WTC11 (cell line): ENCODE measurements at regions of chr2 and their contacts with region 1.

Region 1: GRCh38 chr2:47336259-47337238 is 66.4 kb upstream of the MSH2 start:
- DNase-seq: no peak
- ATAC-seq: no peak
- H3K4me3 Mint-ChIP-seq: no peak overlapping the region
- H3K27ac Mint-ChIP-seq: peak overlapping the region; percentile 55
- H3K4me1 Mint-ChIP-seq: peaks cover 62% of the 10 kb centered on the region
- H3K27me3 Mint-ChIP-seq: no peaks in the 10 kb centered on the region
- CTCF ChIP-seq: no peak

Region 2: GRCh38 chr2:47237375-47237821 is 99.2 kb before region 1 on chr2:
- CTCF ChIA-PET with region 1: no interaction called
- POLR2A ChIA-PET with region 1: no interaction called
- DNase-seq: no peak
- ATAC-seq: peak; percentile 7
- H3K4me3 Mint-ChIP-seq: no peak overlapping the region
- H3K27ac Mint-ChIP-seq: peak overlapping the region; percentile 28; the same call in 1 of the 2 replicates
- H3K4me1 Mint-ChIP-seq: peaks cover 48% of the 10 kb centered on the region
- H3K27me3 Mint-ChIP-seq: peaks cover 5% of the 10 kb centered on the region; the same call in 1 of the 2 replicates
- CTCF ChIP-seq: no peak

Region 3: GRCh38 chr2:47313141-47313691 is 23.3 kb before region 1 on chr2:
- CTCF ChIA-PET with region 1: interaction called, 10 read pairs
- POLR2A ChIA-PET with region 1: no interaction called
- DNase-seq: no peak
- ATAC-seq: peak; percentile 49
- H3K4me3 Mint-ChIP-seq: no peak overlapping the region
- H3K27ac Mint-ChIP-seq: no peak overlapping the region; the same call in 1 of the 2 replicates
- H3K4me1 Mint-ChIP-seq: peaks cover 16% of the 10 kb centered on the region
- H3K27me3 Mint-ChIP-seq: no peaks in the 10 kb centered on the region
- CTCF ChIP-seq: no peak

Region 4: DNA sequence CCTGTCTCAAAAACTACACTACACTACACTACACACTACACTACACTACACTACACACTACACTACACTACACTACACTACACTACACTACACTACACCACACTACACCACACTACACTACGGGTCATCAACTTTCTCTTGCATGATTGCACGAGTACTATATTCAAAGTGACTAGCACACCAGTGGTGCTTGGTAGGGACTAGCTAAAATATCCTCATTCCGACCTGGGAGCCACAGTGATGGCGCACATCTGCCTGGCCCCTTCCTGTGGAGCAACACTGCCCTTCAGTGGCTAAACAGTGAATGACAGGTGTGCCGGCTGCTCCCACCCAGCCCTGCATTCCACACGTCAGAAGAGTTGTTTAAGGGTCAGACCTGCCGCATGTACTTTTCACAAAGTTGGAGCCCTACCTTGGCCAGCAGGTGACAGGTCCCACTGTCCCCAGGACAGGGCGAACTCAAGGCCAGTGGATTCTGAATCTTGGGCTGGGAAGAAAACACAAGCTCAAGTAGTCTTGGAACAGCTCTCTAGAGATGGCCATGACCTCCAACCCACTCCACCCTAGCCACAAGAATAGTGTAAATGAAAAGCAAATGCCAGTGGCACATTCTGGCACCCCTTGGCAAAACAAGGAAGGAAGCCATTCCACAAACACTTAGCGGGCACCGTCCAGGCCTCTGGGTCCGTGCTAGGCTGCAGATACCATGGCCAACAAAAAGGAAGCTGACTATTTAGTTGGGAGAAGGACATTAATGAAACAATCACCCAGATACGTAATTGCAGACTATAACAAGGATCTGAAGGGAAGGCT is 13.3 kb before region 1 on chr2:
- CTCF ChIA-PET with region 1: interaction called, 23 read pairs
- POLR2A ChIA-PET with region 1: no interaction called
- DNase-seq: peak; percentile 85
- ATAC-seq: peak; percentile 93
- H3K4me3 Mint-ChIP-seq: no peak overlapping the region
- H3K27ac Mint-ChIP-seq: no peak overlapping the region
- H3K4me1 Mint-ChIP-seq: peaks cover 17% of the 10 kb centered on the region
- H3K27me3 Mint-ChIP-seq: no peaks in the 10 kb centered on the region
- CTCF ChIP-seq: peak; percentile 96

Region 5: GRCh38 chr2:47373747-47374146 is 37.2 kb after region 1 on chr2:
- CTCF ChIA-PET with region 1: interaction called, 29 read pairs
- POLR2A ChIA-PET with region 1: interaction called, 6 read pairs
- DNase-seq: peak; percentile 49
- ATAC-seq: peak; percentile 11
- H3K4me3 Mint-ChIP-seq: no peak overlapping the region
- H3K27ac Mint-ChIP-seq: peak overlapping the region; percentile 20; the same call in 1 of the 2 replicates
- H3K4me1 Mint-ChIP-seq: peaks cover 24% of the 10 kb centered on the region
- H3K27me3 Mint-ChIP-seq: peaks cover 9% of the 10 kb centered on the region
- CTCF ChIP-seq: no peak

Region 6: GRCh38 chr2:47386551-47386950 is 50.0 kb after region 1 on chr2:
- CTCF ChIA-PET with region 1: interaction called, 107 read pairs
- POLR2A ChIA-PET with region 1: interaction called, 7 read pairs
- DNase-seq: no peak
- ATAC-seq: no peak
- H3K4me3 Mint-ChIP-seq: no peak overlapping the region
- H3K27ac Mint-ChIP-seq: no peak overlapping the region
- H3K4me1 Mint-ChIP-seq: no peaks in the 10 kb centered on the region
- H3K27me3 Mint-ChIP-seq: no peaks in the 10 kb centered on the region
- CTCF ChIP-seq: no peak

Region 7: DNA sequence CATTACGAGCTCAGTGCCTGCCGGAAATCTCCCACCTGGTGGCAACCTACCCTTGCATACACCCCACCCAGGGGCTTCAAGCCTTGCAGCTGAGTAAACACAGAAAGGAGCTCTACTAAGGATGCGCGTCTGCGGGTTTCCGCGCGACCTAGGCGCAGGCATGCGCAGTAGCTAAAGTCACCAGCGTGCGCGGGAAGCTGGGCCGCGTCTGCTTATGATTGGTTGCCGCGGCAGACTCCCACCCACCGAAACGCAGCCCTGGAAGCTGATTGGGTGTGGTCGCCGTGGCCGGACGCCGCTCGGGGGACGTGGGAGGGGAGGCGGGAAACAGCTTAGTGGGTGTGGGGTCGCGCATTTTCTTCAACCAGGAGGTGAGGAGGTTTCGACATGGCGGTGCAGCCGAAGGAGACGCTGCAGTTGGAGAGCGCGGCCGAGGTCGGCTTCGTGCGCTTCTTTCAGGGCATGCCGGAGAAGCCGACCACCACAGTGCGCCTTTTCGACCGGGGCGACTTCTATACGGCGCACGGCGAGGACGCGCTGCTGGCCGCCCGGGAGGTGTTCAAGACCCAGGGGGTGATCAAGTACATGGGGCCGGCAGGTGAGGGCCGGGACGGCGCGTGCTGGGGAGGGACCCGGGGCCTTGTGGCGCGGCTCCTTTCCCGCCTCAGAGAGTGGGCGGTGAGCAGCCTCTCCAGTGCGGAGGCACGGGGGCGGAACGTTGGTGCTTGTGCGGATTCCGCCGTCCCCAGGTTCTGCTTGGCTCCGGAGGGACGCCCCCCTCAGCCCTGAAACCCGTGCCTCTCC is 66.5 kb after region 1 on chr2 and contains the start of gene MSH2:
- CTCF ChIA-PET with region 1: interaction called, 25 read pairs
- POLR2A ChIA-PET with region 1: interaction called, 15 read pairs
- DNase-seq: peak; percentile 95
- ATAC-seq: peak; percentile 91
- H3K4me3 Mint-ChIP-seq: peak within 1 kb of the TSS; percentile 91
- H3K27ac Mint-ChIP-seq: peak within 1 kb of the TSS; percentile 100
- H3K4me1 Mint-ChIP-seq: peaks cover 44% of the 10 kb centered on the region
- H3K27me3 Mint-ChIP-seq: no peaks in the 10 kb centered on the region
- CTCF ChIP-seq: no peak
- total RNA-seq, gene MSH2: 207 to 244 TPM (median 209 TPM) in 3 replicates